ENCODE measurements at regions of chr15 and their contacts with region 1.

Region 1: GRCh38 chr15:60397772-60398445 is at the start of gene ANXA2:
- DNase-seq: peak; percentile 91
- H3K4me3 ChIP-seq: peak within 1 kb of the TSS; percentile 63 to 85 (median 67)
- H3K27ac ChIP-seq: peak within 1 kb of the TSS; percentile 99
- H3K4me1 ChIP-seq: peaks cover 66% of the 10 kb centered on the region
- H3K27me3 ChIP-seq: no peaks in the 10 kb centered on the region
- CTCF ChIP-seq: no peak
- total RNA-seq, gene ANXA2: 5,384 to 5,597 TPM

Region 2: GRCh38 chr15:59838900-59839299 is 559.0 kb before region 1 on chr15:
- CTCF ChIA-PET with region 1: no interaction called
- dilution Hi-C with region 1: no loop called
- in situ Hi-C with region 1: no loop called
- intact Hi-C with region 1: loop called (anchors 5 kb)
- DNase-seq: no peak
- H3K4me3 ChIP-seq: no peak overlapping the region
- H3K27ac ChIP-seq: no peak overlapping the region
- H3K4me1 ChIP-seq: no peaks in the 10 kb centered on the region
- H3K27me3 ChIP-seq: no peaks in the 10 kb centered on the region
- CTCF ChIP-seq: no peak

Region 3: DNA sequence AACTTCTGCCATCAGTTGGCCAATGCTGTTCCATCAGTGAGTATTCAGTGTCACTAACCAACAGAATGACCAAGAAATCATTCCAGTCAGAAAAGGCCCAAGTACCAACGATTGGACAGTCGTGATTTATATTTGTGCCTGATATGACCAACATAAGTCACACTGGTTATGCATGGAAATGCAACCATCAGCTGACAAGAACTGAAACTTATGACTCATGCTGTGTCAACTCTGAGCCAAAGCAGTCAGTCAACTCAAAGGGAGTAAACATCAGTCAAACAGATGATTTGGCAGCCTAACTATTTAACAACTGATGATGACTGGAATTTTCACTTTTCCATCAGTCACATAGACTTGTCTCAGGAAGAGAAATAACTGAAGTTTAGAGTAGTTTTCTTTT is 142.5 kb before region 1 on chr15:
- CTCF ChIA-PET with region 1: no interaction called
- dilution Hi-C with region 1: no loop called
- in situ Hi-C with region 1: no loop called
- intact Hi-C with region 1: no loop called
- DNase-seq: peak; percentile 92
- H3K4me3 ChIP-seq: no peak overlapping the region
- H3K27ac ChIP-seq: no peak overlapping the region
- H3K4me1 ChIP-seq: no peaks in the 10 kb centered on the region
- H3K27me3 ChIP-seq: peaks cover 4% of the 10 kb centered on the region
- CTCF ChIP-seq: no peak

Region 4: GRCh38 chr15:60408438-60409105 is 10.7 kb after region 1 on chr15:
- CTCF ChIA-PET with region 1: no interaction called
- dilution Hi-C with region 1: no loop called
- in situ Hi-C with region 1: no loop called
- intact Hi-C with region 1: loop called (anchors 1 kb)
- DNase-seq: peak; percentile 98
- H3K4me3 ChIP-seq: peak overlapping the region in 1 of 3 experiments; percentile 28
- H3K27ac ChIP-seq: peak overlapping the region; percentile 100
- H3K4me1 ChIP-seq: peaks cover 37% of the 10 kb centered on the region
- H3K27me3 ChIP-seq: no peaks in the 10 kb centered on the region
- CTCF ChIP-seq: no peak

Region 5: GRCh38 chr15:60426870-60427508 is 29.1 kb after region 1 on chr15:
- CTCF ChIA-PET with region 1: no interaction called
- dilution Hi-C with region 1: no loop called
- in situ Hi-C with region 1: no loop called
- intact Hi-C with region 1: loop called (anchors 1 kb)
- DNase-seq: peak; percentile 70
- H3K4me3 ChIP-seq: no peak overlapping the region
- H3K27ac ChIP-seq: peak overlapping the region; percentile 56
- H3K4me1 ChIP-seq: peaks cover 38% of the 10 kb centered on the region
- H3K27me3 ChIP-seq: no peaks in the 10 kb centered on the region
- CTCF ChIP-seq: no peak

Region 6: DNA sequence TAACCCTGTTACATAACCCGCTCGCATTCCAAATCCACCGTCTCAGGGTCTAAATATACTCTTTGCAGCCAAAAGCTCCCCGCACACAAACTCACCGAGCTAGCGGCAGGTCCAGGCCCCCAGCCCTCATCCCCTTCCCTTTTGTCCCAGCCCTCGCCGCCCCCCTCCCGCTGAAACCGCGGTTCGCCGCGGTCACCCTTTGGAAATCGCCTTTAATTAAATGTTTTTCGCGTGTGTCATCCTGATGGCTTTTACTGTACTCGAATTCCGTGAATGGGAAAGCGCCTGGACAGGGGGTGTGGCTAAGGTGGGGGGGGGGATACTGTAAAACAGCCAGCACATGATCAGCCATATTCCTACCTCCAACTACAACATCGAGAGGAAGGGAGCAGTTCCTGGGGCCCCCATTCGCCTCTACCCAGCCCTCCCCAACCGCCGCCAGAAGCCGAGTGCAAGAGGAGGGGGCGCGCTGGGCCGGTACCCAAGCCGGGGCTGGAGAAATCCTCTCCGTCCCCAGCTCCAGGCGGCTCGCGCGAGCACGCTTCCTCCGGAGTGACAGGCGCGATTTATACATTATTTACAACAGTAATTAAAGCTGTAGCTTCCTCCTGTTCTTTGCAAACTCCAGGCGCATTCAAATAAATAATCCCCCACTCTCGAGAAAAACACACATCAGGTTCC is 829.5 kb after region 1 on chr15:
- CTCF ChIA-PET with region 1: interaction called, 16 read pairs
- dilution Hi-C with region 1: no loop called
- in situ Hi-C with region 1: no loop called
- intact Hi-C with region 1: no loop called
- DNase-seq: peak; percentile 52
- H3K4me3 ChIP-seq: peak overlapping the region; percentile 65 to 92 (median 69)
- H3K27ac ChIP-seq: no peak overlapping the region
- H3K4me1 ChIP-seq: no peaks in the 10 kb centered on the region
- H3K27me3 ChIP-seq: no peaks in the 10 kb centered on the region
- CTCF ChIP-seq: no peak